Right cardiac atrium (tissue), 5 donors: ENCODE measurements at regions of chr13 and their contacts with region 1.

Region 1: GRCh38 chr13:56378566-56378965 is 762.2 kb upstream of the PRR20A start:
- DNase-seq: no peak
- ATAC-seq: no peak
- H3K4me3 ChIP-seq: no peak overlapping the region
- H3K27ac ChIP-seq: no peak overlapping the region
- H3K4me1 ChIP-seq: no peaks in the 10 kb centered on the region
- H3K27me3 ChIP-seq: no peaks in the 10 kb centered on the region

Region 2: GRCh38 chr13:55583953-55584593 is 794.5 kb before region 1 on chr13:
- intact Hi-C with region 1: no loop called
- DNase-seq: no peak
- ATAC-seq: no peak
- H3K4me3 ChIP-seq: no peak overlapping the region
- H3K27ac ChIP-seq: no peak overlapping the region
- H3K4me1 ChIP-seq: no peaks in the 10 kb centered on the region
- H3K27me3 ChIP-seq: no peaks in the 10 kb centered on the region

Region 3: GRCh38 chr13:56396318-56396717 is 17.8 kb after region 1 on chr13:
- intact Hi-C with region 1: loop called in 1 of 4 experiments (anchors 2 kb)
- DNase-seq: no peak
- ATAC-seq: no peak
- H3K4me3 ChIP-seq: no peak overlapping the region
- H3K27ac ChIP-seq: no peak overlapping the region
- H3K4me1 ChIP-seq: no peaks in the 10 kb centered on the region
- H3K27me3 ChIP-seq: no peaks in the 10 kb centered on the region